K562 (cell line): ENCODE measurements at regions of chr1 and their contacts with region 1.

Region 1: GRCh38 chr1:175078629-175079028 is 11.0 kb downstream of the TNN start:
- DNase-seq: no peak
- ATAC-seq: no peak
- H3K4me3 ChIP-seq: no peak overlapping the region
- H3K27ac ChIP-seq: no peak overlapping the region
- H3K4me1 ChIP-seq: peaks cover 0 to 5% of the 10 kb centered on the region in 2 experiments; a peak in 1 of 5 replicates
- H3K27me3 ChIP-seq: peaks cover 52 to 76% of the 10 kb centered on the region in 2 experiments
- CTCF ChIP-seq: no peak
- EP300 ChIP-seq: no peak
- POLR2A ChIP-seq: no peak
- RAD21 ChIP-seq: no peak

Region 2: DNA sequence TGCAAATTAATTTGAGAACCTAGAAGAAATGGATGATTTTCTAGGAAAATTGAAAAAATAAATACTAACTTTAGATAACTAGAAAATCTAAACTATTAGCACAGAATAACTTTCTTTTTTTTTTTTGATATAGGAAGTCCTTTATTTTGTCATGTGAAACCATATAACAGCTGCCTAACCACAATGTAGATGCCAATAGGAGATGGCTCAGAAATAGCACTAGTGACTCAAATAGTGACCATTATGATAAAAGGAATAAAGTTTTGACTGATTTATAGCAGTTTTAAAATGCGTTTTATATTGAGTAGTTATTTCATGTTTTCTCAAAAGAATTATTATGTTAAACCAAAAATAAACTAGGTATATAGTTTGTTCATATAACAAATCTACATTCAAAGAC is 236.9 kb before region 1 on chr1:
- CTCF ChIA-PET with region 1: no interaction called
- POLR2A ChIA-PET with region 1: no interaction called
- in situ Hi-C with region 1: no loop called
- intact Hi-C with region 1: no loop called
- DNase-seq: no peak
- ATAC-seq: no peak
- H3K4me3 ChIP-seq: no peak overlapping the region
- H3K27ac ChIP-seq: no peak overlapping the region
- H3K4me1 ChIP-seq: no peaks in the 10 kb centered on the region
- H3K27me3 ChIP-seq: no peaks in the 10 kb centered on the region
- CTCF ChIP-seq: no peak
- EP300 ChIP-seq: no peak
- POLR2A ChIP-seq: no peak
- RAD21 ChIP-seq: no peak

Region 3: DNA sequence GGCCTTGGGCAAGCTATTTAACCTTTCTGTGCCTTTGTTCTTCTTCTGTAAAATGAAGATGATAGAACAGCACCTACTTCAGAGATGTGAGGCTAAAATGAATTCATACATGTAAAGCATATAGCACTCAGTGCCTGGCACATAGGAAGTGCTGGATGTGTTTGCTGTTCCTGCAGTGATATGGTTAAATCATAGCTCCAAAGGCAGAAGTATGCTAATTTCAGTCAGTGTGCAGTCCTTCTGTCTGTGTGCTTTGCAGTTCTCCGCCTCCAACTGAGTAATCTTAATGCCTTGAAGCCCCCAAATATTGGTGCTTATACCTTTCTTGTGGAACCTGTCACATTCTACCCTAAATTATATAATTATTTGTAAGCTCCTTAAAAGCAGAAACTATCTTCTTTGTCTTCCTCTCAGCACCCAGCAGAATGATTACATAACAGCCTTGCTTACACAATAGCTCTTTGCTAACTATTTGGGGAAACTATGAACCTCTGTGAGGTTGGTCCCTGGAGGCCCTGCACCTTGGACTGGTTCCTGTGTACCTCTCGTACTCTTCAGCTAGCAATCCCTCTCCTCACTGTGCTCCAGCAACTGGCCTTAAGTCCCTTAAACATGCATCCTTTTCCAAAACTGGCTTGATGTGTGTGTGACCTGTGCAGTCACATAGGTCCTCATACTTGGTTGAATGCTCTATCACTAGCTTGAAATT is 135.9 kb before region 1 on chr1:
- CTCF ChIA-PET with region 1: no interaction called
- POLR2A ChIA-PET with region 1: no interaction called
- in situ Hi-C with region 1: no loop called
- intact Hi-C with region 1: no loop called
- DNase-seq: no peak
- ATAC-seq: no peak
- H3K4me3 ChIP-seq: no peak overlapping the region
- H3K27ac ChIP-seq: no peak overlapping the region
- H3K4me1 ChIP-seq: peaks cover 0 to 12% of the 10 kb centered on the region in 2 experiments; a peak in 2 of 5 replicates
- H3K27me3 ChIP-seq: no peaks in the 10 kb centered on the region
- CTCF ChIP-seq: no peak
- EP300 ChIP-seq: no peak
- POLR2A ChIP-seq: no peak
- RAD21 ChIP-seq: no peak

Region 4: DNA sequence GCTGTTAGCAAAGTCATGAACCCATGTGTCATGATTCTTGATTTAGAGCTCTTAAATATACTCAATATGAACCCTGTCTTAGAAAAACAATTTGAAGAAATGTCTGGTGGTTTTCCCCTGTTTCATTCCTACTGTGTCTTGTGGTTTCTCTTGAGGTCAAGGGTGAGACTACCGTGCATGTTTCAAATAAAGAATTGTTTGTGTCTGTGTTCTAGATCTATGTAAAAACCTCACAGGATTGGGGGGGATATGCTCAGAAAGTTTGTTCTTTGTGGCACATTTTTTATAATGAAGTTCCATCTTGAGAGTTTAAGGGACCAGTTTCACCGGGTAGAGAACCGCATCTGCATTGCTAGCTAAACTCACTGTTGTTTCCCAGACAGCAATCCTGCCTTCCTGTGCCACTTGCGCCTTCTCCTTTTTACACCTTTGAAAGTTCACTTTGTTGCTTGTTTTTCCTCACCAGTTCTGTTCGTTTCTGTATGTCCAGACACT is 109.8 kb before region 1 on chr1:
- CTCF ChIA-PET with region 1: no interaction called
- POLR2A ChIA-PET with region 1: no interaction called
- in situ Hi-C with region 1: no loop called
- intact Hi-C with region 1: no loop called
- DNase-seq: peak in 2 of 4 experiments; percentile 36 to 57
- ATAC-seq: no peak
- H3K4me3 ChIP-seq: no peak overlapping the region
- H3K27ac ChIP-seq: peak overlapping the region; percentile 40; the same call in 1 of the 3 replicates
- H3K4me1 ChIP-seq: peaks cover 3 to 59% of the 10 kb centered on the region in 2 experiments; a peak in 4 of 5 replicates
- H3K27me3 ChIP-seq: no peaks in the 10 kb centered on the region
- CTCF ChIP-seq: no peak
- EP300 ChIP-seq: no peak
- POLR2A ChIP-seq: no peak
- RAD21 ChIP-seq: no peak

Region 5: DNA sequence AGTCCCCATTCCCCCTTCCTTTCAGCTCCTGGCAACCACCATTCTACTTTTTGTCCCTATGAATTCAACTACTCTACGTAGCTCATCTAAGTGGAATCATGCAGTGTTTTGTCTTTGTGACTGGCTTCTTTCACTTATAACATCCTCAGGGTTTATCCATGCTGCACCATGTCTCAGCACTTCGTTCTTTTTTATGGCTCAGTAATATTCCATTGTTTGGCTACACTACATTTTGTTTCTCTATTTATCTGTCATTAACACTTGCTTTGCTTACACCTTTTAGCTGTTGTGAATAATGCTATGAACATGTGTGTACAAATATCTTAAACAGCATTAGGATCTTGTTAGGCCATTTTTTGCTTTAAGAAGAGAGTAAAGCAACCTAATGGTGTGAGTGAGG is 53.9 kb before region 1 on chr1:
- CTCF ChIA-PET with region 1: no interaction called
- POLR2A ChIA-PET with region 1: no interaction called
- in situ Hi-C with region 1: no loop called
- intact Hi-C with region 1: no loop called
- DNase-seq: no peak
- ATAC-seq: no peak
- H3K4me3 ChIP-seq: no peak overlapping the region
- H3K27ac ChIP-seq: no peak overlapping the region
- H3K4me1 ChIP-seq: peaks cover 4 to 12% of the 10 kb centered on the region in 2 experiments; a peak in 3 of 5 replicates
- H3K27me3 ChIP-seq: no peaks in the 10 kb centered on the region
- CTCF ChIP-seq: no peak
- EP300 ChIP-seq: no peak
- POLR2A ChIP-seq: no peak
- RAD21 ChIP-seq: no peak

Region 6: GRCh38 chr1:175089136-175089718 is 10.6 kb after region 1 on chr1:
- CTCF ChIA-PET with region 1: no interaction called
- POLR2A ChIA-PET with region 1: interaction called, 10 read pairs
- in situ Hi-C with region 1: no loop called
- intact Hi-C with region 1: no loop called
- DNase-seq: no peak
- ATAC-seq: no peak
- H3K4me3 ChIP-seq: no peak overlapping the region
- H3K27ac ChIP-seq: no peak overlapping the region
- H3K4me1 ChIP-seq: no peaks in the 10 kb centered on the region
- H3K27me3 ChIP-seq: peaks cover 19 to 32% of the 10 kb centered on the region in 2 experiments; a peak in 4 of 5 replicates
- CTCF ChIP-seq: no peak
- EP300 ChIP-seq: no peak
- POLR2A ChIP-seq: no peak
- RAD21 ChIP-seq: no peak

Region 7: DNA sequence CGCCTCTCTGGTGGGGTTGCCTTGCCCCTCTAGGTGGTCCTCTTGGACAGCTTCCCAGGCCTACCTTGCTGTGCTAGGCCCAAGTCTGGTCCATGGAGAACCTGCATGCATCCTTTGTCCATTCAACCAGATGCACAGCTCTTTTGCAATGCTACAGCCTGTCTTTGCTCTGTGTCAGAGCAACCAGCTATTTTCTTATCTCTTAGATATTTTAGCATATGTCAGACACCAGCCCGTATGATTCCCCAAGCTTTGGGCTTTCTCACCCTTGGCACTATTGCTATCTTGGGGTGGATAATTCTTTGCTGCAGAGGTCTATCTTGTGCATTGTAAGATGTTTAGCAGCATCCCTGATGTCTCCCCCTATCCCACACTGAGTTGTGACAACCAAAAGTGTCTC is 21.3 kb after region 1 on chr1:
- CTCF ChIA-PET with region 1: no interaction called
- POLR2A ChIA-PET with region 1: interaction called, 3 read pairs
- in situ Hi-C with region 1: no loop called
- intact Hi-C with region 1: loop called (anchors 2 kb)
- DNase-seq: no peak
- ATAC-seq: peak; percentile 36
- H3K4me3 ChIP-seq: no peak overlapping the region
- H3K27ac ChIP-seq: no peak overlapping the region
- H3K4me1 ChIP-seq: no peaks in the 10 kb centered on the region; a peak in 1 of 5 replicates
- H3K27me3 ChIP-seq: peaks cover 9 to 14% of the 10 kb centered on the region in 2 experiments
- CTCF ChIP-seq: no peak
- EP300 ChIP-seq: no peak
- POLR2A ChIP-seq: no peak
- RAD21 ChIP-seq: no peak